Activated T-helper 1 cell treated with anti-CD3 and anti-CD28 coated beads, Interleukin-12 subunit alpha, Interleukin-12 subunit beta, Interleukin-2, Interleukin-4 antibody, amounts not matched to agents 30 ng/mL and 10 ng/mL and 1 ng/mL, durations not matched to agents 14 hours and 24 hours and 36 hours (primary cell): ENCODE measurements at regions of chr5 and their contacts with region 1.

Region 1: GRCh38 chr5:75236322-75237316 is at the start of gene ANKRD31:
- DNase-seq: peak; percentile 86
- H3K4me3 Mint-ChIP-seq: peak within 1 kb of the TSS; percentile 90
- H3K27ac Mint-ChIP-seq: peak within 1 kb of the TSS; percentile 97
- H3K4me1 Mint-ChIP-seq: peaks cover 15% of the 10 kb centered on the region
- H3K27me3 Mint-ChIP-seq: peaks cover 6% of the 10 kb centered on the region
- total RNA-seq, gene ANKRD31: 0.36 and 0.37 TPM in 2 replicates

Region 2: GRCh38 chr5:74945561-74946165 is 291.0 kb before region 1 on chr5:
- intact Hi-C with region 1: loop called (anchors 10 kb)
- DNase-seq: peak; percentile 11
- H3K4me3 Mint-ChIP-seq: no peak overlapping the region
- H3K27ac Mint-ChIP-seq: peak overlapping the region; percentile 20
- H3K4me1 Mint-ChIP-seq: peaks cover 11% of the 10 kb centered on the region
- H3K27me3 Mint-ChIP-seq: peaks cover 33% of the 10 kb centered on the region

Region 3: DNA sequence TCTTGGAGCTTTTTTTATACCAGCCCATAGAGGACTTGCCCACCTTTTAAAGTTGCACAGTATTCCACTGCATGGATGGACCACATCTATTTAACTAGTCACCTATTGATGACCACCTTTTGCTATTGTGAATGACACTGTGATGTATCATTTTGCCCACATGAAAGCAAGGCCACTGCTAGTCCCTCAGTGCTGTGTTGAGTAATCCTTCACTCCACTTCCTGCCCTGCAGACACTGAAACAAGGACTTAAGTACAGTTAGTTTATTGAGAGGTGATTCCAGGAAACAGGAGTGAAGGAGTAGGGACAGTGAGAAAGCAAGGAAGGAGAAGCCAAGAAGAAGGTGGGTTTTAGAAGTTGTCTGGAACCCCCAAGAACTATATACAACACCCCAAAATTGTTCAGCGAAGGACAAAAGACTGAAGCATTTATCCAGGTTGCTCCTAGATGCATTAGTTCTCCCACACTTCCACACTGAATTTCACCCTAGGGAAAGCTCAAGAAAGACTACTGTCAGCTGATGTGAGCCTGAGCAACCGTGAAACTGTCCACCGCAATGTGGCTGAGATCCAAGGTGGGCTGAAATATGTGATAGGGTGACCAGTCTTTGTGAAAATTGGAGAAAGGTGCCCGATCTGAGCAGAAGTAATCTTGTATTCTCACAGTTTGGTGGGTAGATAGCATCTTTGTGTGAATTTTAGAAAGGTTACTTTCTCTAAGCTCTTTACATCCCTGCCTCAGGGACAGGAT is 45.3 kb after region 1 on chr5:
- intact Hi-C with region 1: no loop called
- DNase-seq: no peak
- H3K4me3 Mint-ChIP-seq: no peak overlapping the region
- H3K27ac Mint-ChIP-seq: no peak overlapping the region
- H3K4me1 Mint-ChIP-seq: no peaks in the 10 kb centered on the region
- H3K27me3 Mint-ChIP-seq: peaks cover 6% of the 10 kb centered on the region

Region 4: DNA sequence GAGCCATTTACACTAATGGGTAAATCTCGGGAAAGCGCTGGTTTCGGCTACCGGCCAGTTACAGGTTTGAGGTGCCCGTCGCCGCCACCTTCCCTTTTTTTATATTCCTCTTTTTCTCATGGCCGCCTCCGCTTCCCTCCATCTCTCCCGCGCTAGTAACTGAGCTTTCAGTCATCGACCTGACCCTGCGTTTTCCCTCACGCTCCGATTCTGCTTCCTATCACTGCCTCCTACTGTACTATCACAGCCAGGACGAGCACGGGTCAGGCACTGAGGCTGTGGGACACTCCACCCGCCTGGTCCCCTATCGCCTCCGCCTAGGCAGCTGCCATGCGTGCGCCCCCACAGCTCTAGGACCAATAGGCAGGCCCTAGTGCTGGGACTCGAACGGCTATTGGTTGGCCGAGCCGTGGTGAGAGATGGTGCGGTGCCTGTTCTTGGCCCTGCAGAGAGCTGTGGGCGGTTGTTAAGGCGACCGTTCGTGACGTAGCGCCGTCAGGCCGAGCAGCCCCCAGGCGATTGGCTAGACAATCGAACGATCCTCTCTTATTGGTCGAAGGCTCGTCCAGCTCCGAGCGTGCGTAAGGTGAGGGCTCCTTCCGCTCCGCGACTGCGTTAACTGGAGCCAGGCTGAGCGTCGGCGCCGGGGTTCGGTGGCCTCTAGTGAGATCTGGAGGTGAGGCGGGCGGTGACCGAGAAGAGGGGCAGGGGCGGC is 100.2 kb after region 1 on chr5 and contains the start of gene HMGCR:
- intact Hi-C with region 1: loop called (anchors 1 kb)
- DNase-seq: peak; percentile 96
- H3K4me3 Mint-ChIP-seq: no peak within 1 kb of the TSS
- H3K27ac Mint-ChIP-seq: no peak within 1 kb of the TSS
- H3K4me1 Mint-ChIP-seq: peaks cover 40% of the 10 kb centered on the region
- H3K27me3 Mint-ChIP-seq: no peaks in the 10 kb centered on the region
- total RNA-seq, gene HMGCR: 95.7 and 113 TPM in 2 replicates

Region 5: GRCh38 chr5:75433814-75434506 is 197.3 kb after region 1 on chr5:
- intact Hi-C with region 1: no loop called
- DNase-seq: no peak
- H3K4me3 Mint-ChIP-seq: no peak overlapping the region
- H3K27ac Mint-ChIP-seq: no peak overlapping the region
- H3K4me1 Mint-ChIP-seq: peaks cover 5% of the 10 kb centered on the region
- H3K27me3 Mint-ChIP-seq: no peaks in the 10 kb centered on the region

Region 6: GRCh38 chr5:75566710-75567309 is 330.2 kb after region 1 on chr5:
- intact Hi-C with region 1: loop called (anchors 5 kb)
- DNase-seq: peak; percentile 39
- H3K4me3 Mint-ChIP-seq: peak overlapping the region; percentile 29
- H3K27ac Mint-ChIP-seq: peak overlapping the region; percentile 81
- H3K4me1 Mint-ChIP-seq: peaks cover 53% of the 10 kb centered on the region
- H3K27me3 Mint-ChIP-seq: no peaks in the 10 kb centered on the region

Region 7: DNA sequence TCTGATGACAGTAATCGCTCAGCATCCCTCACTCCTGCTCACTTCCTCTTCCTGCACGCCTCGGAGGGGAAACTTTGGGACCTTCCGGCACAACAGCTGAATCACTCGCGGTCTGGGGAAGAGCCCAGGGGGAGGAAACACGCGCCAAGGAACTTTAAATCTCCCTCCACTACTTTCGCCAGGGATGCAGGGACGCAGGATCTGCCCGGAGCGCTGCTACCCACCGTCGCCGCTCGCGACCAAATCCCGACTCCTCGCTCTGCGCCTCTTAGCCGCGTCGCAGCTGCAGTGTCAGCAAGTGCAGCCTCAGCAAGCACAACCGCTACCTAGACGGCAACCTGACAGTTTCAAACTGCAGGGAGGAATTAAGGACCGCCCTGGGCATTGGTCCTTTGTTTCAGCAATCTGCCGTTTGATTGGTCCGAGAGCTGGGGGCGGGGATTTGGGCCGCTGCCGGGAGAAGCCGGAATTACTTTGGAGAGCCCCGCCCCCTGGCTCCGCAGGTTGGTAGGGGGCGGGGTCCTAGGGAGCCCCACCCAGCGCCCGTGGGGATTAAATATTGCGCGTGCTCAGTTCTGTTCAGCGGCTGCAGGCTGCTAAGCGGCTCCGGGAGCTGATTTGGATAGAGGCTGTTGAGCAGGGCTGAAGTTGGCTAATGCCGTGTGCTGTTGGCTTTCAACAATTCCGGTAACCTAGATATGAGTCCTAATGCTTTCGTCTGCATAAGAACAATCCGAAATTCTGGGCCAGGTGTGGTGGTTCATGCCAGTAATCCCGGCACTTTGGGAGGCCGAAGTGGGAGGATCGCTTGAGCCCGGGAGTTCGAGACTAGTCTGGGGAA is 480.7 kb after region 1 on chr5 and contains the start of gene POC5:
- intact Hi-C with region 1: loop called (anchors 1 kb)
- DNase-seq: peak; percentile 98
- H3K4me3 Mint-ChIP-seq: peak within 1 kb of the TSS; percentile 98
- H3K27ac Mint-ChIP-seq: peak within 1 kb of the TSS; percentile 100
- H3K4me1 Mint-ChIP-seq: peaks cover 34% of the 10 kb centered on the region
- H3K27me3 Mint-ChIP-seq: peaks cover 3% of the 10 kb centered on the region
- total RNA-seq, gene POC5: 20.7 and 24.2 TPM in 2 replicates